Left lung (tissue), 14 donors: ENCODE measurements at regions of chr6 and their contacts with region 1.

Region 1: GRCh38 chr6:10487668-10488327 is 33.4 kb upstream of the GCNT2 start:
- DNase-seq: peak in 1 of 4 donors; percentile 82
- ATAC-seq: no peak
- H3K4me3 ChIP-seq: no peak overlapping the region
- H3K27ac ChIP-seq: no peak overlapping the region
- H3K4me1 ChIP-seq: no peaks in the 10 kb centered on the region
- H3K27me3 ChIP-seq: peaks cover 0 to 44% of the 10 kb centered on the region in 2 donors
- CTCF ChIP-seq: no peak

Region 2: GRCh38 chr6:10633216-10633615 is 145.4 kb after region 1 on chr6:
- intact Hi-C with region 1: no loop called
- DNase-seq: no peak
- ATAC-seq: peak; percentile 81
- H3K4me3 ChIP-seq: no peak overlapping the region
- H3K27ac ChIP-seq: peak overlapping the region in 1 of 2 donors; percentile 0
- H3K4me1 ChIP-seq: no peaks in the 10 kb centered on the region
- H3K27me3 ChIP-seq: no peaks in the 10 kb centered on the region
- CTCF ChIP-seq: no peak

Region 3: DNA sequence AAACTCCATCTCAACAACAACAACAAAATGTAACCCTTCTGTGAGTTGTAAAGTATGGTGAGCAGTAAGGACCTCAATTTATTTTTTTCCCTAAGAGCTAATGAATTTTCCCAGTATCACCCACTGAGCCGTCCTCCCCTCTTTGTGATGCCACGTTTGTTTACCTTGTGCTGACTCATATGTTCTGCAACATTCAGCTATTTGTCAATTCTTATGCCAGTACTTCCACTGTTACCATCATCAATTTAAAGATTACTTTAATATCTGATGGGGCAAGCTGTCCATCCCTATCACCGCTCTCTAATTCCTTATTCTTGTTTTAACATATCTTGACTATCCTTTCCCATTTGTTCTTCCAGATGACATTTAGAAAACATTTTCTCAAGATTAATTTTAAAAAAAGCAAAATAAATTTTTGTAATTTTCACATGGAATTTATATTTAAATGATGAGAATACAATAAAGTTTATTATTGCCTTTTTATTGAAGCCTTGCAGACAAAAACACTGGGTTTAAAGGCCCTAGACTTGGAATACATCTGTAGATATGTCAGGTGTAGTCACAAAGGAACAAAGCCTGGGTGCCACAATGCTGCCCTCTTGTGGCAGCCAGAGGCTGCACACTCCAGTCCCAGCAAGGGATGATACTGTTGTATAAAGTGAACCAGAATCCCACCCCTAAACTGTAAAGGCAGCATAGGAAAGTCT is 313.2 kb after region 1 on chr6:
- intact Hi-C with region 1: loop called in 1 of 2 experiments (anchors 10 kb)
- DNase-seq: peak; percentile 25 to 82 (median 54)
- ATAC-seq: peak; percentile 100
- H3K4me3 ChIP-seq: no peak overlapping the region
- H3K27ac ChIP-seq: no peak overlapping the region
- H3K4me1 ChIP-seq: peaks cover 0 to 2% of the 10 kb centered on the region in 2 donors
- H3K27me3 ChIP-seq: no peaks in the 10 kb centered on the region
- CTCF ChIP-seq: peak; percentile 96 to 99